ENCODE measurements at regions of chr5 and their contacts with region 1.

Region 1: DNA sequence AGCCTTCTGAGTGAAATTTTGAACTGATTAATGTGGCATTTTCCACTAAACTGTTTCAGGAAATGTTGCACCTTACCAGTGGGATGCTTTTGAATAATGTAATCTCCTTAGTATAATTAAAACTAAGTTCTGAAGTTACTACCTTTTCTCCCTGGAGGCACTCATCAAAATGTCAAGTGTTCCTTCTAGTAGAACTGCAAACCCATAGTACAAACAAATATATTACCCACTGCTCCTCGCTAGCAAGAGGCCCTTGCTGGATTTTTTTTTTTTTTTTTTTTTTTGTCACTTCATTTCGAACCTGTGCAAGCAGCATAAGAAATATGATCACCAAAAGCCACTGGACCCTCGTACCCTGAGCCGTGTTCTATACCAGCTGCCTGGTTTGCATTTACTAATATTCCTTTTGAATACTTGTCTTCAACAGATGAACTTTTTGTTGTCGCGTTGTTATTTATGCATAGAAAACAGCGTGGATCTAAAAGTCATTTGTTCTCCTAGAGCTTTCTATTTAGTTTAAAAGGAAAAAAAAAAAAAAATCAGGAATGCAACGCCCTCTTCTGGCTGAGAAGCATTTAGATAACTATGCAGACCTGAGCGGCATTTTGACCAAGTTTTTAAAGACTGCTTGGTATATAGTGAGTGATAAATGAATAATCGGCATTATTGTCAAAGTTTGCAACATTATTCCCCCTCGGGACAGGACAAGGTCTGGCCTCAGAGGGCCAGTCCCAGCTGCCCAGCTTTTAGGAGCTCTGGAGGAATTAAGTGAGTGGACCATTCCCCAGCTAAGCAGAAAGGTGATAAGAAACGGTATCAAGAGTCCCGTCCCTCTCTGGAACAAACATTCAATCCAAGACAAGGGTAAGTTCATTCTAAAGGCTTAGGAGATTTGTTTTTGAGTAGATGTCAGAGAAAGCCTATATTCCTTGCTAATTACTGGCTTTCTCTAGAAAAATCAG is 162.5 kb upstream of the KIF2A start:
- DNase-seq: peak in 1 of 2 experiments; percentile 25
- ATAC-seq: peak; percentile 56 to 88; a peak in 3 of 6 replicates
- H3K4me3 ChIP-seq: no peak overlapping the region
- H3K27ac ChIP-seq: no peak overlapping the region
- H3K4me1 ChIP-seq: no peaks in the 10 kb centered on the region; the same call in 2 of the 3 replicates
- CTCF ChIP-seq: peak; percentile 76
- EP300 ChIP-seq: no peak
- POLR2A ChIP-seq: no peak
- RAD21 ChIP-seq: peak; percentile 51 to 61

Region 2: DNA sequence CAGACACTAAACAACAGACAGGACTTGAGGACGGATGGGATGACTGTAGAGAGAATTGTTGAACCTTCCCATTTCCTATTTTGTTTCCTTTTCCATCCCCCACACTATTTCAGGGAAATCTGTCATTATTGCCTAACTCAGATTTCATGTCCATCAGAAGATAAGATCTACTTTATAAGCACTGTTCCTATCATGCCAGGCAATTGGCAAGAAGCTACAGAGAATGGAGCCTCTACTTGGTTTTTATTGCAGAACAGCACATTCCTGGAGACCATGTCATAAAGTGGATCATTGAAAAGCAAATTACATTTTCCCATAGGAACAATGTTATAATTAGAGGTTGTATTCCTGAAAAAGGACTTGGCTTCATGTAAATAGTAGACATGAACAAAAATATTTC is 11.3 kb before region 1 on chr5:
- CTCF ChIA-PET with region 1: interaction called, 23 read pairs
- POLR2A ChIA-PET with region 1: no interaction called
- DNase-seq: no peak
- ATAC-seq: no peak
- H3K4me3 ChIP-seq: no peak overlapping the region
- H3K27ac ChIP-seq: no peak overlapping the region
- H3K4me1 ChIP-seq: no peaks in the 10 kb centered on the region
- CTCF ChIP-seq: no peak
- EP300 ChIP-seq: no peak
- POLR2A ChIP-seq: no peak
- RAD21 ChIP-seq: no peak

Region 3: DNA sequence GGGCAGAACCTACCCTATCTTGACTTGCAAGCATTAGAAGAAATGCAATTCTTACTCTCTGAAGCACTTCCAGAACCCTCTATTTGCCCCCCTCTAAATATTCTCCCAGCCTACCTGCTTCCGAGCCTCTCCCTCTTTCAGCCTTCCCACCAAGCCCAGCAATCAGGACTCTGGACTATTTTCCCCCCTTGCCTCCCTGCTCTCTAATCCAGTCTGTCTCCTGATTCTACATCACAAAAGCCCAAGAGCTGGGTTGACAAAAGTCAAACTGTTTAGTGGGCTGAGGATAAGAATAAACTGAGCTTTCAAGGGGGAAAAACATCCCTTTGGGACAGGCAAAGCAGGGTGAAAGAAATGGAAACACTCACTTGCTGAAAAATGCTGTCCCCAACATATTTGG is 39.3 kb after region 1 on chr5:
- CTCF ChIA-PET with region 1: no interaction called
- POLR2A ChIA-PET with region 1: no interaction called
- DNase-seq: no peak
- ATAC-seq: no peak
- H3K4me3 ChIP-seq: no peak overlapping the region
- H3K27ac ChIP-seq: no peak overlapping the region
- H3K4me1 ChIP-seq: no peaks in the 10 kb centered on the region
- CTCF ChIP-seq: no peak
- EP300 ChIP-seq: no peak
- POLR2A ChIP-seq: no peak
- RAD21 ChIP-seq: no peak